K562 (cell line): ENCODE measurements at regions of chrX and their contacts with region 1.

Region 1: DNA sequence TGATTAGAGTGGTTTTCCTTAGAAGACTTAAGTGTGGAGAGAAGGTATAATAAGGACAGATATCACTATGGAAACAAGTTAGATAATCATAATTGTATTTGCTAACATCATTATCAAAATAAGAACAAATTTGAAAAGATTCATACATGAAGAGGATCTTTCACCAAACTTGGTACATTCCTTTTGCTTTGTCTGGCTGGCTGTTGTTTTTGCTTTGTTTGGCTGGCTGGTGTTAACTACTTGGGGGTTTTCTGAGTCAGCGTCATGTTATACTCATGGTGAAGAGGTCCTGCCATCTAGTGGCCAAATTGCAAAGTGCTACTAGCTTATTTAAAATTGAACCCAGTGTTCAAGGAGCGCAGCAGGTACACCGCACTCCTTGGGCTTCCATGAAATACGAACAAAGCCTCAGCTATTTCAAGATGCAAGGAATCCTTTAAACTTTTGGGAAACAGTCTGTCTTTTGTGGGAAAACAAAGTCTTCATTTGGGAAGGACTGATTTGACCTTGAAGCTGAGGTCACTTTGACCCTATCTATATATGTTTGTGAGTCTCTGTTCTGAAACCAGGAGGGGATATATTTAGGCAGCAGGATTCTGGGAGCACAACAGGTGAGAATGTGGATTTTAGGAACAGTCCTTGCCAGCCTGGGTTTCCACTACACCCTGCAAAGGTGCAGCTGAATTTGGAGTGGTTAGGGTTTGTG is 129.7 kb downstream of the PLS3 start:
- DNase-seq: peak; percentile 35 to 59 (median 47)
- ATAC-seq: peak; percentile 90
- H3K4me3 ChIP-seq: no peak overlapping the region
- H3K27ac ChIP-seq: no peak overlapping the region
- H3K4me1 ChIP-seq: no peaks in the 10 kb centered on the region
- H3K27me3 ChIP-seq: no peaks in the 10 kb centered on the region
- CTCF ChIP-seq: peak; percentile 45 to 70 (median 70)
- EP300 ChIP-seq: no peak
- POLR2A ChIP-seq: no peak
- RAD21 ChIP-seq: peak; percentile 24 to 49; a peak in 3 of 4 replicates

Region 2: DNA sequence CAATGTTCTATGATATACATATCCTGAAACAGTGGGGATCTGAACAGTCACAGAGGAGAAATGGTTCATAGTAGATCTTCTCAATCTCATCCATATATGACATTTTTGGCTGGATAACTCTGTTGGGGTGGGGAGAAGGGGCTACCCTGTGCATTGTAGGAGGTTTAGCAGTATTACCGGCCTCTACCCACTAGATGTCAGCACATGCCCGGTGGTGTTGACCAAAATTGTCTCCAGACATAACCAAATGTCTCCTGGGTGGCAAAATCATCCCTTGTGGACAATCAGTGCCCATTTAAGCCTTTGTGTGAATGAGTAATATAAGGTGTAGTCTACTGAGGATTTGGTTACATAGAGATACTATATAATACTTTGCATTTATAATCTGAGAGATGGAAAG is 39.7 kb before region 1 on chrX:
- CTCF ChIA-PET with region 1: interaction called, 3 read pairs
- POLR2A ChIA-PET with region 1: no interaction called
- in situ Hi-C with region 1: no loop called
- intact Hi-C with region 1: loop called (anchors 1 kb)
- DNase-seq: peak; percentile 8 to 47 (median 16)
- ATAC-seq: peak; percentile 83
- H3K4me3 ChIP-seq: no peak overlapping the region
- H3K27ac ChIP-seq: no peak overlapping the region
- H3K4me1 ChIP-seq: no peaks in the 10 kb centered on the region
- H3K27me3 ChIP-seq: no peaks in the 10 kb centered on the region
- CTCF ChIP-seq: peak; percentile 54 to 64 (median 59); a peak in 4 of 6 replicates
- EP300 ChIP-seq: no peak
- POLR2A ChIP-seq: no peak
- RAD21 ChIP-seq: peak; percentile 50 to 55

Region 3: GRCh38 chrX:115892787-115893671 is 202.4 kb after region 1 on chrX:
- CTCF ChIA-PET with region 1: no interaction called
- POLR2A ChIA-PET with region 1: no interaction called
- in situ Hi-C with region 1: loop called (anchors 25 kb)
- intact Hi-C with region 1: no loop called
- DNase-seq: peak; percentile 35 to 63 (median 45)
- ATAC-seq: peak; percentile 89
- H3K4me3 ChIP-seq: no peak overlapping the region
- H3K27ac ChIP-seq: peak overlapping the region; percentile 39; the same call in 2 of the 3 replicates
- H3K4me1 ChIP-seq: peaks cover 9 to 11% of the 10 kb centered on the region in 2 experiments; a peak in 4 of 5 replicates
- H3K27me3 ChIP-seq: no peaks in the 10 kb centered on the region
- CTCF ChIP-seq: peak; percentile 29 to 64 (median 55); a peak in 5 of 6 replicates
- EP300 ChIP-seq: no peak
- POLR2A ChIP-seq: no peak
- RAD21 ChIP-seq: peak; percentile 75 to 76